ENCODE measurements at regions of chr7 and their contacts with region 1.

Region 1: DNA sequence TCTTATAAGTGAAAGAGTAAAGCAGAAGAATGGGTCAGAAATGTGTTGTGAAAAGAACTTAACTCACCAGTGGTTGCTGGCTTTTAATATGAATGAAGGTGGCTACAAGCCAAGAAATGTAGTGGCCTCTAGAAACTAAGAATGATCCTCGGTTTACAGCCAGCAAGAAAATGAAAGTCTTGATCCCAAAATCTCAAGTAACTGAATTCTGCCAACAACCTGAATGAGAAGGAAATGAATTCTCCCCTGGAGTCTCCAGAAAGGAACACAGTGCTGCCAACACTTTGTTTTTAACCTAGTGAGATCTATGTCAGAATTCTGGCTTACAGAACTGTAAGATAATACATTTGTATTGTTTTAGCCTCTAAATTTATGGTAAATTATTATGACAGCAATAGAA is 193.0 kb downstream of the FZD1 start:
- DNase-seq: no peak
- ATAC-seq: no peak
- H3K4me3 ChIP-seq: no peak overlapping the region
- H3K4me3 Mint-ChIP-seq: no peak overlapping the region
- H3K27ac ChIP-seq: no peak overlapping the region
- H3K27ac Mint-ChIP-seq: no peak overlapping the region
- H3K4me1 ChIP-seq: no peaks in the 10 kb centered on the region
- H3K4me1 Mint-ChIP-seq: no peaks in the 10 kb centered on the region
- H3K27me3 ChIP-seq: no peaks in the 10 kb centered on the region
- H3K27me3 Mint-ChIP-seq: no peaks in the 10 kb centered on the region
- CTCF ChIP-seq: no peak

Region 2: DNA sequence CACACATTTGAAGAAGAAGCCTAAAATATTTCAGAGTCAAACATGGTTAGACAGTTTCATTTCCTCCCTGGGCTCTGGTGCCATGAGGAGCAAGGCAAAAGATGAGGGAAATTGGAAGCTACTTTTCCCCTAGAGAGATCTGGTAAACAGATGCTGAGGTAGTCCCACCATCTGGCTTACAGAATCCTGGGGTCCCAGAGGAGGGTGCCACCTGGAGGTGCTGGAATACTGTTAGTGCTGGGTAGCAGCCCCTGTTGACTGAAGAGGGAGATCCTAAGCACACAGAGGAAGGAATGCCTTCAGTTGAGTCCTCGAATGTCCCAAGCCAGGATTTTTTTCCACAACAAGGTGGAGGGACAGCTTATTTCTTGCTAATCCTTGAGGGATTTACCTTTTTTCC is 32.8 kb before region 1 on chr7:
- intact Hi-C with region 1: loop called (anchors 2 kb)
- DNase-seq: no peak
- ATAC-seq: no peak
- H3K4me3 ChIP-seq: no peak overlapping the region
- H3K4me3 Mint-ChIP-seq: no peak overlapping the region
- H3K27ac ChIP-seq: no peak overlapping the region
- H3K27ac Mint-ChIP-seq: no peak overlapping the region
- H3K4me1 ChIP-seq: no peaks in the 10 kb centered on the region
- H3K4me1 Mint-ChIP-seq: no peaks in the 10 kb centered on the region
- H3K27me3 ChIP-seq: no peaks in the 10 kb centered on the region
- H3K27me3 Mint-ChIP-seq: no peaks in the 10 kb centered on the region
- CTCF ChIP-seq: no peak

Measured in natural killer cell (primary cell).